ENCODE measurements at regions of chr12 and their contacts with region 1.

Region 1: GRCh38 chr12:109858764-109859163 is 21.6 kb downstream of the GLTP start:
- DNase-seq: no peak
- H3K4me3 ChIP-seq: no peak overlapping the region
- H3K4me3 Mint-ChIP-seq: no peak overlapping the region
- H3K27ac ChIP-seq: no peak overlapping the region
- H3K27ac Mint-ChIP-seq: peak overlapping the region in 2 of 7 donors; percentile 30 to 50
- H3K4me1 ChIP-seq: peaks cover under 1 to 2% of the 10 kb centered on the region in 2 donors
- H3K4me1 Mint-ChIP-seq: peaks cover 5% of the 10 kb centered on the region
- H3K27me3 ChIP-seq: no peaks in the 10 kb centered on the region
- H3K27me3 Mint-ChIP-seq: no peaks in the 10 kb centered on the region
- CTCF ChIP-seq: no peak

Region 2: GRCh38 chr12:109899783-109900751 is 41.3 kb after region 1 on chr12 and contains the start of gene TCHP:
- intact Hi-C with region 1: loop called (anchors 2 to 10 kb)
- DNase-seq: peak; percentile 83 to 87 (median 84)
- H3K4me3 ChIP-seq: peak within 1 kb of the TSS; percentile 84 to 87 (median 85)
- H3K4me3 Mint-ChIP-seq: peak within 1 kb of the TSS; percentile 97 to 98
- H3K27ac ChIP-seq: peak within 1 kb of the TSS; percentile 65 to 74
- H3K27ac Mint-ChIP-seq: peak within 1 kb of the TSS; percentile 89 to 96 (median 94)
- H3K4me1 ChIP-seq: peaks cover 20 to 23% of the 10 kb centered on the region in 2 donors
- H3K4me1 Mint-ChIP-seq: peaks cover 24% of the 10 kb centered on the region
- H3K27me3 ChIP-seq: no peaks in the 10 kb centered on the region
- H3K27me3 Mint-ChIP-seq: no peaks in the 10 kb centered on the region
- CTCF ChIP-seq: peak; percentile 32
- polyA plus RNA-seq, gene TCHP: 2.6 to 24.5 (median 7.3) TPM

Region 3: DNA sequence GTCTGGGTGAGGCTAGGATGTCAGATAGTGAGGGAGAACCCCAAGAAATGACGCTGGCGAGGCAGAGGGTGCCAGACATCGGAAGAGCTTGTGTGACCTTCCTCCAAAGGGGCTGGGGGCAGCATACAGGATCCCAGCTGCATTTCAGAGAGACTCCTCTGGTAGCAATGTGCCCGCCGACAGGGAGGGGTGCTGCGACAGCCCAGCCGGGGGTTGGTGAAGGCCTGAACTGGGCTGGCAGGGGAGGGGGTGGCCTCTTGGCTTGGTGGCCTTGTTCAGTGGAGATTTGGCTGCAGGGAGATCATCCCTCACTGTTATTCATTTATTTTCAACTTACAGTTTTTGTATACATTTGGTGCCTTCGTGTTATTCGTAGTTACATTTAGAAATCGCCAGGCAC is 46.5 kb after region 1 on chr12:
- intact Hi-C with region 1: loop called (anchors 2 to 10 kb)
- DNase-seq: no peak
- H3K4me3 ChIP-seq: no peak overlapping the region
- H3K4me3 Mint-ChIP-seq: no peak overlapping the region
- H3K27ac ChIP-seq: no peak overlapping the region
- H3K27ac Mint-ChIP-seq: peak overlapping the region in 4 of 7 donors; percentile 24 to 72 (median 26)
- H3K4me1 ChIP-seq: peaks cover 14 to 19% of the 10 kb centered on the region in 2 donors
- H3K4me1 Mint-ChIP-seq: peaks cover 22% of the 10 kb centered on the region
- H3K27me3 ChIP-seq: no peaks in the 10 kb centered on the region
- H3K27me3 Mint-ChIP-seq: no peaks in the 10 kb centered on the region
- CTCF ChIP-seq: no peak

Region 4: DNA sequence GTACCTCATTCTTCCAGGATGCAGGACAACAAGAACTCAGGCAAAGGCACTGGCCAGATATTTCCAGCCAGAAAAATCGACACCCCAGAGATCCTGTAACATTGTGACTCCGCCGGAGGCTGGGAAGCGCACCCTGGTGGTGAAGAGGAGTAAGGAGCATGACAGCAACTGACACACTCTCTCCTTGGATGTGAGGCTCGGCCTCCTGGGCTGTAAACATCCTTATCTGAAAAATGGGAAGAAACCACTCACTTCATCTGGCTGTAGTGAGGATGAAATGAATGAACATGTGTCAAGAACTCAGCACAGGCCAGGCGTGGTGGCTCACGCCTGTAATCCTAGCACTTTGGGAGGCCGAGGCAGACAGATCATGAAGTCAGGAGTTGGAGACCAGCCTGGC is 68.9 kb after region 1 on chr12:
- intact Hi-C with region 1: loop called (anchors 2 to 5 kb)
- DNase-seq: peak; percentile 25 to 42 (median 36)
- H3K4me3 ChIP-seq: no peak overlapping the region
- H3K4me3 Mint-ChIP-seq: no peak overlapping the region
- H3K27ac ChIP-seq: no peak overlapping the region
- H3K27ac Mint-ChIP-seq: peak overlapping the region in 2 of 7 donors; percentile 59 to 62
- H3K4me1 ChIP-seq: no peaks in the 10 kb centered on the region
- H3K4me1 Mint-ChIP-seq: no peaks in the 10 kb centered on the region
- H3K27me3 ChIP-seq: no peaks in the 10 kb centered on the region
- H3K27me3 Mint-ChIP-seq: no peaks in the 10 kb centered on the region
- CTCF ChIP-seq: peak; percentile 67

Region 5: DNA sequence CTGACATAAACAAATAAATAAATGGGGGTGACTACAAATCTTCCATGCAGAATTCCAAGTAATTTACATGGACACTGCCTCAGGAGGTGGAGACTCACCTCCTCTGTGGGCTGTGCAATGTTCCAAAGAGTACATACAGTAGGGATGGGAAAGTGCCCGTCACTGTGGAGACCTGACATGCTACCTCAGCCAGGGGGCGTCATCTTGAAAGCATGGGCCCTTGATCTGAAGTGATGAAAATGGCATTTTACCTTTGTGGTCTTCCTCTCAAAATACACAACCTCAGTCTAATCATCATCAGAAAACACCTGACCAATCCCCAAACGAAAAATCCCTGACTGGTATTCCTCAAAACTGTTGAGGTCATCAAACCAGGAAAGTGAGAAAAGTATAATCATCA is 496.3 kb after region 1 on chr12:
- intact Hi-C with region 1: no loop called
- DNase-seq: peak in 1 of 3 donors; percentile 24
- H3K4me3 ChIP-seq: no peak overlapping the region
- H3K4me3 Mint-ChIP-seq: no peak overlapping the region
- H3K27ac ChIP-seq: no peak overlapping the region
- H3K27ac Mint-ChIP-seq: peak overlapping the region in 1 of 7 donors; percentile 14
- H3K4me1 ChIP-seq: peaks cover 10 to 12% of the 10 kb centered on the region in 2 donors
- H3K4me1 Mint-ChIP-seq: peaks cover 20% of the 10 kb centered on the region
- H3K27me3 ChIP-seq: no peaks in the 10 kb centered on the region
- H3K27me3 Mint-ChIP-seq: peaks cover 2 to 4% (median 2%) of the 10 kb centered on the region in 3 donors
- CTCF ChIP-seq: peak; percentile 53